ENCODE measurements at regions of chr19 and their contacts with region 1.

Region 1: DNA sequence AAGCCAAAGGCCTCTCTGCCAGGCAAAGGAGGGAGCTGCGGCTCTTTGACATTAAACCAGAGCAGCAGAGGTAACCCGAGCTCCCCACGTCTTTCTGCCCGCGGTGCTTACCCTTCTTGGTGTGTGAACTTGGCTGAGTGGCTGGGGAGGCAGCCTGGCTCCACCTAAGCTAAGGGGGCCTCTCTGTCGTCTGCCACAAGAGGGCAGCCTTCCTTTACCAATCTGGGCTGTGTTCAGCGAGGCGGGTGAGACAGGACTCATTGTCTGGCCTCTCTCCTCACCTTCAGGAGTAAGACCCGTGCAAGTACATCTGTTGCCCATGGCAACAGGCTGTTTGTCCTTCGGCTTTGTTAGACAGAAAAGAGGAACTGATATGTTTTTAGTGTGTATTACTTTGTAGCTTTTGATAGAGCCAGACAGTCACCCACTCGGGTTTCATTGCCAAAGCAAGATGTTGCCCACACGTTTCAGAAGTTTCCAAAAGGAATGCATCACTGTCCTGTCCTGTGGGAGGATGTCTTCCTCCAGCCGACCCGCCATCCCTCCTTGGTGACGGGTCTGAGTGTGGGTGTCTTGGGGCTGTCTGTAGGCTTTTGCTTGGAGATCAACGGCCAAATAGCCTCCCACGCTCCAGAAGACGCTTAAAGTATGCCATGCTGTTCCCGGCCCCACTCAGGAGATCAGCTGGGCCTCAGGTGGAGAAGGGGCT is 4.6 kb downstream of the POP4 start:
- DNase-seq: peak; percentile 66 to 90 (median 82)
- ATAC-seq: peak; percentile 53 to 61
- H3K4me3 Mint-ChIP-seq: peak overlapping the region in 2 of 10 donors; percentile 43 to 67
- H3K27ac Mint-ChIP-seq: peak overlapping the region in 8 of 10 donors; percentile 38 to 92 (median 82)
- H3K4me1 Mint-ChIP-seq: peaks cover 16 to 39% (median 38%) of the 10 kb centered on the region in 4 donors
- H3K27me3 Mint-ChIP-seq: peaks cover 0 to 4% (median 0%) of the 10 kb centered on the region in 5 donors

Region 2: DNA sequence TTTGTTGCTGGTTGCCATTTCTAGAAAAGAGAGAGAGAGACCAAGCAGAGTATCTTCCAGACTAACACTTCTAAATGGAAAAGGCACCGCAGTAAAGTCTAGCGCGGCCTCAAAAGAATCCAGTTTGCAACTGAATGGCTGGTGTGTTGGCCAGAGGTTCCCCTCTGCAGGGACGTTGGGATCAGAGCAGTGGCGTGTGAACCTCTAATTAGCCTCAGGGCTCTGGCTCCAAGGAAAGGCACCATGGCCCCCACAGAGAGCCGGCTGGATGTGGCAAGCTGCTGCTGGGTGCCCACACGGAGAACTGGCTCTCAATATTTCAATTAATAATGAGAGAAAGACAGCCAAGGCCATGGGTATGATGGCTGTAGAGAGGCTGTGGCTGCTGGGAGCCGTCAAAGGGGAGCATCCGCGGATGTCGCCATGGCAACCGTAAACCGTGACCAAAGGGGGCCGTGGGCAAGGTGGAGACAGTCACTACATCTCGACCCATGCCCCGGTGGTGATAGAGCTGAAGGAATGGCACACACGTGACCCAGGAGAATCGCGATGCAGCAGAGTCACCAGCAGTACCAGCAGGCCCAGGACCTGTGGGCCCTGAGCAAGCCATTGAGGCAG is 75.4 kb before region 1 on chr19:
- POLR2A ChIA-PET with region 1: no interaction called
- DNase-seq: no peak
- ATAC-seq: no peak
- H3K4me3 Mint-ChIP-seq: no peak overlapping the region
- H3K27ac Mint-ChIP-seq: no peak overlapping the region
- H3K4me1 Mint-ChIP-seq: peaks cover 1 to 4% (median 3%) of the 10 kb centered on the region in 4 donors
- H3K27me3 Mint-ChIP-seq: peaks cover 15 to 65% (median 44%) of the 10 kb centered on the region in 5 donors

Region 3: DNA sequence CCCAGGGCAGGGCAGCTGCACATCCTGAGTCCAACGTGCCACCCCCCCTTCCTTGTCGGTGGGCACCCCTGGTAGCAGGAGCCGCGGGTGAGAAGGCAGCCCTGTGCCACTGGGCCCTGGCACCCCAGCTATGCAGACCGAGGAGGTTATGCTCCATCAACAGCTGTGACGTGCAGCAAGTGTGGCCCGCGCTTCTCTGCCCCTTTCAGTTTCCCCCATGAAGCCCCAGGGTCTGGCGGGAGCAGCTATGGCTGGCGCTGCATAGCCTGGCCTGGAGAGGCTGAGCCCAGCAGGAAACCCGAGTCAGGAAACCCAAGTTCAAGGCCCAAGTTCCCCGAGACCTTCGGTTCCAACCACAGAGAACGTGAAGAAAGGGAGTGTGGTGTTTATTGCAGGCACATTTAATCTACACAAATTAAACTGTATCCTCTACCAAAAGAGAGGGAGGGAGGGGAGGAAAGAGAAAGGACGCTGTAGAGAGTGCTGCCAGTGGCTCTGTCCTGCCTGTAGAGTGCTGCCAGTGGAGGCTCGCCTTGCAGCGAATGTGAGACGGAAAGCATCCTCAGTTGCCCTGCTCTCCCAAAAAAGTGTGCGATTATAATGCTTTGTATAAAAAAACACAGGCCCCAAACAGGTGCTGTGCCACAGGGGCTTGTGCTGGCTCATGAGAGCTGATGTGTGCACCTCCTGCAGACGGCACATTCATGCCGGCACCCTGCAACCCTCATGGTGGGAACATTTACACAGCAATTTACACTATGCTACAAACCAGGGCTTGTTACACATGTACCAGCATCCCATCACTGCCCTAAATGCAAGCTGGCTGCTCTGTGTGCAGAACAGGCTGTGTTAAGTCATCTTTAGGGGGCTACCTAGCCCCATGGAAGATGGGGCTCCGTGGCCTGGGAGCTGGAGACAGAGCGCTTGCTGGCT is 11.7 kb after region 1 on chr19:
- POLR2A ChIA-PET with region 1: interaction called, 26 read pairs
- DNase-seq: peak in 6 of 10 donors; percentile 24 to 60 (median 38)
- ATAC-seq: peak; percentile 74 to 86
- H3K4me3 Mint-ChIP-seq: peak overlapping the region; percentile 50 to 85 (median 70)
- H3K27ac Mint-ChIP-seq: peak overlapping the region; percentile 43 to 96 (median 86)
- H3K4me1 Mint-ChIP-seq: peaks cover 29 to 51% (median 43%) of the 10 kb centered on the region in 4 donors
- H3K27me3 Mint-ChIP-seq: no peaks in the 10 kb centered on the region

Region 4: DNA sequence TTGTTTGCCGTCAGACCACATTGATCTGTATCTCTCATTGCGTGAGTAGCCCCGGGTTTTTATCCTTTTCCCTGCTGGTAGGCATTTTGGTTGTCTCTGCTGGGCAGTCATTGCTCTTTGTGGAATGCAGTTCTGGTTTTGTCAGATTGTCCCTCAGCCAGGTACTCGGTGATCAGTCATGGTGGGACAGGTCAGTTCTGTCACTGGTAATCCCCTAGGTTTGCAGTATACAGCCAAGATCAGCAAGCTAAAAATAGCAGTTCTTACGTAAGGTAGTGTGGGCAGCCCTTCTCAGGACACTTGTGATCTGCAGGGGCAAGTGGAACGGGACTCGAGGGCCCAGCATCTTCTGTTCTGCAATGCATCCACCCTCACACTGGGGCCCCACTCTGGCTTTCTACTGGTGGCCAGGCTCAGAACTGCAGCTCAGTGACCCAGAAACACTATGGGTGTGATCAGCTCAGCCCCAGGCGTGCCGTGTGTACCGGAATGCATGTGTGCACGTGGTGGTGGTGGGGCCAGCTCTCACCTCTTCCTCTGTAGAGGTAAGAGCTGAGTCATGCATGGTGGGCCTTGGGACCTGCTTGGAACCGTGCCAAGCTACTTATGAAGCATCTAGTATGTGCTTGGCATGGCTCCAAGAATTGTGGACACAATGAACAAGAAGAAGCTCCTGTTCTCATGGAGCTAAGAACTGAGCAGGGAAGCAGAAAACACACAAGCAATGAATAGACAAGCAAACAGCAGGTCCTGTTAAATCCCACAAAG is 60.9 kb after region 1 on chr19:
- POLR2A ChIA-PET with region 1: interaction called, 140 read pairs
- DNase-seq: peak; percentile 46 to 91 (median 72)
- ATAC-seq: peak; percentile 47 to 54
- H3K4me3 Mint-ChIP-seq: peak overlapping the region; percentile 63 to 94 (median 84)
- H3K27ac Mint-ChIP-seq: peak overlapping the region; percentile 90 to 99 (median 98)
- H3K4me1 Mint-ChIP-seq: peaks cover 37 to 94% (median 88%) of the 10 kb centered on the region in 4 donors
- H3K27me3 Mint-ChIP-seq: no peaks in the 10 kb centered on the region

Region 5: DNA sequence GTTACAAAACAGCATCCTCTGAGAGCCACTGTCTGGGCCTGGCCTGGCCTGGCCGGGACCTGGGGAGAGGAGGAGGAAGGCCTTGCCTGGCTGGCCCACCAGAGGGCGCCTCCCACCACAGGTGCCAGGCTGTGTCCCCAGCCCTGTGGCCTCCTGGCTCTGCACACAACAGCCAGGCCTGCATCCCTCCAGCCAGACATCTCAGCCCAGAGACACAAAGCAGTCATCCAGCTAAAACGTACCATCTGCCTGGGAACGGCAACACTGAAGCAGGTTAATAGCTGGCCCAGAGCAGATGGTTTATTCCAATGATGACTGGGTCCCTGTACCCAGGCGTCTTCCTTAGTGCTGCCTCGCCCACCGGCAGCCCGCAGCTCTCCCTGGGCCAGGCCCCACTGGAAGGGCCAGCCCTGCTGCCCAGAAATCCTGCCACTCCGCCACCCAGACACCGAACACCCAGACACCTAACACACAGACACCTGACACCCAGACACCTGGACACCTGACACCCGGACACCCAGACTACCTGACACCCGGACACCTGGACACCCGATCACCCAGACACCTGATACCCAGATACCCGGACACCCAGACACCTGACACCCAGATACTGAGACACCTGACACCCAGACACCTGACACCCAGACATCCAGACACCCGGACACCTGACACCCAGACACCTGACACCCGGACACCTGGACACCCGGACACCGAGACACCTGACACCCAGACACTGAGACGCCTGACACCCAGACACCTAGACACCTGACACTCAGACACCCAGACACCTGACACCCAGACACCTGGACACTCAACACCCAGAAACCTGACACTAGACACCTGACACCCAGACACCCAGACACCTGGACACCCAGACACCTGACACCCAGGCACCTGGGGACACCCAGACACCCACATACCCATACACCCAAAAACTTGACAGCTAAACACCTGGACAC is 84.2 kb after region 1 on chr19:
- POLR2A ChIA-PET with region 1: interaction called, 11 read pairs
- DNase-seq: peak; percentile 67 to 88 (median 82)
- ATAC-seq: peak; percentile 99
- H3K4me3 Mint-ChIP-seq: peak overlapping the region in 1 of 10 donors; percentile 24
- H3K27ac Mint-ChIP-seq: peak overlapping the region in 9 of 10 donors; percentile 4 to 92 (median 83)
- H3K4me1 Mint-ChIP-seq: peaks cover 19 to 40% (median 29%) of the 10 kb centered on the region in 4 donors
- H3K27me3 Mint-ChIP-seq: no peaks in the 10 kb centered on the region

Region 6: DNA sequence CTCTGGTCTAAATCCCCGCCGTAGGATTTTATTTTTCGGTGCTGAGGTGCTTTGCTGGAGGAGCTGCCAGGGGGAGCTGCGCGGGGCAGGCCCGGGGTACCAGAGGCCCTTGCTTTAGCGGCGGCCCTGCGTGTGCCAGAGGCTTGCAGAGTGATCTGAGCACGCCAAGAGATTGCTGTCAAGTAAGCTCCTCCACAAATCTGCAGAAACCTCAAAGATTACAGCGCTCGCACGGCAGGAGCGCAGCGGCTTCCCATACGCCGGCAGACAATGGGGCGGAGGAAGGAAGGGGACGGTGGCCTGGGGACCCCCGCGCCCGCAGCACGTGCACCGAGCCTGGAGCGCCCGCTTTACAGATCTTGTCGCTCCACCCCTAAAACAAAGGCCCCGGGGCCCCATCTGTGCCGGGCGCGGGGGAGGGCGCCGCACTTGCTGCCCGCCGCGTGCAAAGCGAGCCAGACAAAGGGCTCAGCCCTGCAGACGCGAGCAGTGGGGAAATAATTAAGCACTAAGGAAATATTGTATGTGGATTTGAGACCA is 113.5 kb after region 1 on chr19:
- POLR2A ChIA-PET with region 1: interaction called, 23 read pairs
- DNase-seq: peak; percentile 6 to 72 (median 46)
- ATAC-seq: peak; percentile 85 to 92
- H3K4me3 Mint-ChIP-seq: peak overlapping the region; percentile 71 to 89 (median 84)
- H3K27ac Mint-ChIP-seq: peak overlapping the region; percentile 31 to 95 (median 80)
- H3K4me1 Mint-ChIP-seq: peaks cover 6 to 21% (median 15%) of the 10 kb centered on the region in 4 donors
- H3K27me3 Mint-ChIP-seq: peaks cover 0 to 3% (median 0%) of the 10 kb centered on the region in 5 donors

Region 7: GRCh38 chr19:29941828-29942403 is 331.2 kb after region 1 on chr19 and contains the start of gene URI1:
- POLR2A ChIA-PET with region 1: interaction called, 41 read pairs
- DNase-seq: peak; percentile 86 to 99 (median 93)
- ATAC-seq: peak; percentile 85 to 88
- H3K4me3 Mint-ChIP-seq: peak within 1 kb of the TSS; percentile 92 to 98 (median 95)
- H3K27ac Mint-ChIP-seq: peak within 1 kb of the TSS; percentile 82 to 98 (median 95)
- H3K4me1 Mint-ChIP-seq: peaks cover 22 to 49% (median 43%) of the 10 kb centered on the region in 4 donors
- H3K27me3 Mint-ChIP-seq: peaks cover 0 to 3% (median 0%) of the 10 kb centered on the region in 5 donors
- polyA plus RNA-seq, gene URI1: 17.3 to 41.7 (median 37.7) TPM